ENCODE measurements at regions of chr2 and their contacts with region 1.

Region 1: GRCh38 chr2:240434728-240435456 is 571 bp upstream of the GPC1 start:
- DNase-seq: peak; percentile 88
- H3K4me3 Mint-ChIP-seq: peak overlapping the region; percentile 83
- H3K27ac Mint-ChIP-seq: peak overlapping the region; percentile 61
- H3K4me1 Mint-ChIP-seq: no peaks in the 10 kb centered on the region
- H3K27me3 Mint-ChIP-seq: peaks cover 13% of the 10 kb centered on the region

Region 2: DNA sequence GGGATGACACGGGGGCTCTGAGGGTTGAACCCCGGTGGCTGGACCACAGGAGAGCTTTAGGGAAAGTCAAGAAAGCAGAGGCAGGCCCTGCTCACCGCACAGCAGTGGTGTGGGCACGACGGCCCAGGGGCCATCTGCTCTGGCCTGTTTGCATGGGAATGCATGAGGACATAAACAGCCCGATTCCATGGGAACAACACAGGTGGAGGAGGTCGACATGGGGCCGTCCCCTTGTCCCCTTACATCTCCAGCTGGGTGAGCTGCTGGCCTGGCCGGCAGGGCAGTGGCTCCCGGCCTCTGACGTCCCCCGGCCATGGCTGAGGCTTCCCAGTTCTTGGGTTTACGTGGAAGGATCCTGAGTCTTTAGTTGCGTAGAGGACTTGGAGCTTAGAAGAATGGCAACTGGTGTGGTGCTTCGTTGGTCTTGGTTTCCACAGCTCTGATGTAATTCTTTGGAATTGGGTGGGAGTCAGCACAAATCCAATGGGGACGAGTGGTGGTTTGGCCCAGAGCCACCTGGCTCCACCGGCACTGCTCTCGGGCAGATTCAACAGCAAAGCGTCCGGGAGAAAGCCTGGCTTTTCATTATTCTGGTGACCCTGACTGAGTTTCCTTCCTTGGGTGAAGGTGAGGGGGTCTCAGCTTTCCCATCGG is 935.8 kb before region 1 on chr2:
- intact Hi-C with region 1: no loop called
- DNase-seq: no peak
- H3K4me3 Mint-ChIP-seq: no peak overlapping the region
- H3K27ac Mint-ChIP-seq: no peak overlapping the region
- H3K4me1 Mint-ChIP-seq: no peaks in the 10 kb centered on the region
- H3K27me3 Mint-ChIP-seq: peaks cover 8% of the 10 kb centered on the region

Region 3: DNA sequence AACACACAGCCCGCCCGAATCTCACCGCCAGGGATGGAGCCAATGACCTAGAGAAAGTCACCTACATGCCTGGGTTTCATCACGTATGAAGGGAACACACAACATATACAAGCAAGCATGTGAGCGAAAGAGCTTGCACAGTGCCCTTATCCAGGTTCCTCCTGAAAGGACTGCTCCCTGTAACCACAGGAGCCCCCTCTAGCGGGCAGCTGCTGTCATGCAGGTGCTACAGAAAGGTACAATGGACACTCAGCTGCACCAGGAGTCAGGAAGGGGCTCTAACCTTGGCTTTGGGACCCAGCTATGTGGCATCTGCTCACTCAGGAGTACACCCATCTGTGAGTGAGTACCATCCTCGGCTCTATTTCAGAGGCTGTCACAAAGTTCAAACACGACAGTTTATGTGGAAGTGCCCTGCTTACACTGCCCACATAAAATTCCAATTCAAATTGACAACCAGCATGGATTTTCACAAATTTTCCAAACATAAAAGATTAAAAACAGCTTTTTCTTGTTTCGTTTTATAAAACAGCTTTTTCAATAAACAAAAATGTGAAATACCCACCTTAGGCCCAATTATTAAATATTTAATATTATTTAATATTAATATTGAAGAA is 413.3 kb before region 1 on chr2:
- intact Hi-C with region 1: loop called (anchors 10 kb)
- DNase-seq: peak; percentile 48
- H3K4me3 Mint-ChIP-seq: no peak overlapping the region
- H3K27ac Mint-ChIP-seq: no peak overlapping the region
- H3K4me1 Mint-ChIP-seq: peaks cover 21% of the 10 kb centered on the region
- H3K27me3 Mint-ChIP-seq: no peaks in the 10 kb centered on the region

Region 4: DNA sequence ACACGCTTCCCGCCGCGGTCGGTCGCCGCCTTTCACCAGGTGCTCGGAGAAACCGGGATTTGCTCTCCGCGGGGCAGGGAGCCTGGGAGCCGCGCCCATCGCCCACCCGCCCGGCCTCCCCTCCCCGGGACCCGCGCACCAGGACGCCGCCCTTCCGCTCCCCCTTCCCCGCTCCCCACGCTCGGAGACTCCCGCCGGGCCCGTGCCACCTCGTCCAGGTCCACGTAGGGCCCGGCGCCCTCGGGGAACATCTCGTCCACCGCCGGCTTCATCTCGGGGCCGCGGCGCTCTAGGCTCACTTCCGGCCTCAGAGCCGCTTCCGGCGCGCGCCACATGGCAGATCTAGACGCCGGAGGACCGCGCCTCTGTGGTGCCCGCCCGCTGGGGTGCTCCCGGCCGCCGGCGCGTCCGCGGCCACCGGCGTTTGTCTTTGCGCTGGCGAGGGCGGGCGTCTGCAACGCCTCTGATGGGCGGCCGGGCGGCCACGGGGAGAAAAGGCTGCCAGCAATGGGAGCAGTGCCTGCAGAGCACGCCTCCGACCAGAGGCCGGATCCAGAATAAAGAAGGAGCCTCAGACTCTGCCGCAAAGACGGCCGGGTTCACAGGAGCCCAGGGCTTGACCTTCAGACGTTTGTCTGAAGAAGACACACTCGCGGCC is 298.8 kb before region 1 on chr2 and contains the start of gene COPS9:
- intact Hi-C with region 1: loop called (anchors 5 kb)
- DNase-seq: peak; percentile 85
- H3K4me3 Mint-ChIP-seq: peak within 1 kb of the TSS; percentile 92
- H3K27ac Mint-ChIP-seq: peak within 1 kb of the TSS; percentile 84
- H3K4me1 Mint-ChIP-seq: peaks cover 25% of the 10 kb centered on the region
- H3K27me3 Mint-ChIP-seq: peaks cover 6% of the 10 kb centered on the region
- total RNA-seq, gene COPS9: 127 and 132 TPM in 2 replicates

Region 5: DNA sequence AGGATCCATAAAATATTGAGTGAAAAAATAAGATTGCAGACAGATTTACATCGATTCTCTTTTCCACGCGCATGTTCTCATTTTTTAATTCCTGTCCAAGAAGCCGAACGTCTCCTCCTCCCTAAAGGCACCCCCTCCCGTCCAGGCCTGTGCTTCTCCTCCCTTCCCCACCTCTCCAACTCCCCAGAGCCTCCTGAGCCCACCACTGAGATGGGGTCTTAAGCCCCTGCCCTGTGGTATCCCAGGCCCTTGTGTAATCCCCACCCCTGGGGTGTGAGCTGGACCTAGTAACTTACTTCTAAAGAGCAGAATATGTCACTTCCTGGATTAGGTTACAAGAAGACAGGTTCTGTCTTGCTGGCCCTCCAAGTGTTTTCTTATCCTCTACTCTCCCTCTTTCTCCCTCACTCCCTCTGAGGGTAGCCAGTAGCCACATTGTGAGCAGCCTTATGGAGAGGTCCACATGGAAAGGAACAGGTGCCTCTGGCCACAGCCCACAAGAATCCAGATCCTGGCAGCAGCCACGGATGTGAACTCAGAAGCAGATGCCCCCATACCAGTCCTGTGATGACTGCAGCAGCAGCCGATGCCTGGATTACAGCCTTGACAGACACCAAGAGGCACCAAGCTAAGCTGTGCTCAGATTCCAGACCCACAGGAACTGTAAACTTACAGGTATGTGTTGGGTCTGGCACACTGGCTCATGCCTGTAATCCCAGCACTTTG is 254.8 kb before region 1 on chr2:
- intact Hi-C with region 1: no loop called
- DNase-seq: no peak
- H3K4me3 Mint-ChIP-seq: no peak overlapping the region
- H3K27ac Mint-ChIP-seq: no peak overlapping the region
- H3K4me1 Mint-ChIP-seq: no peaks in the 10 kb centered on the region
- H3K27me3 Mint-ChIP-seq: peaks cover 8% of the 10 kb centered on the region

Region 6: GRCh38 chr2:240298803-240299709 is 135.8 kb before region 1 on chr2:
- intact Hi-C with region 1: loop called (anchors 1 kb)
- DNase-seq: no peak
- H3K4me3 Mint-ChIP-seq: no peak overlapping the region
- H3K27ac Mint-ChIP-seq: no peak overlapping the region
- H3K4me1 Mint-ChIP-seq: no peaks in the 10 kb centered on the region
- H3K27me3 Mint-ChIP-seq: no peaks in the 10 kb centered on the region

Region 7: GRCh38 chr2:240586198-240586918 is 151.5 kb after region 1 on chr2 and contains the start of gene CAPN10:
- intact Hi-C with region 1: loop called (anchors 1 kb)
- DNase-seq: peak; percentile 97
- H3K4me3 Mint-ChIP-seq: peak within 1 kb of the TSS; percentile 96
- H3K27ac Mint-ChIP-seq: peak within 1 kb of the TSS; percentile 93
- H3K4me1 Mint-ChIP-seq: peaks cover 38% of the 10 kb centered on the region
- H3K27me3 Mint-ChIP-seq: no peaks in the 10 kb centered on the region
- total RNA-seq, gene CAPN10: 49.8 and 55.4 TPM in 2 replicates

Measured in activated T-helper 1 cell treated with anti-CD3 and anti-CD28 coated beads, Interleukin-12 subunit alpha, Interleukin-12 subunit beta, Interleukin-2, Interleukin-4 antibody, amounts not matched to agents 30 ng/mL and 10 ng/mL and 1 ng/mL, durations not matched to agents 14 hours and 24 hours and 36 hours (primary cell).